HepG2 (cell line): ENCODE measurements at regions of chr16 and their contacts with region 1.

Region 1: GRCh38 chr16:5502467-5502869 is 404.9 kb upstream of the EEF2KMT start:
- DNase-seq: peak; percentile 21
- ATAC-seq: peak; percentile 80
- H3K4me3 ChIP-seq: no peak overlapping the region
- H3K27ac ChIP-seq: no peak overlapping the region
- H3K4me1 ChIP-seq: no peaks in the 10 kb centered on the region
- H3K27me3 ChIP-seq: peaks cover 0 to 5% of the 10 kb centered on the region in 2 experiments; a peak in 2 of 5 replicates
- CTCF ChIP-seq: peak; percentile 86
- EP300 ChIP-seq: no peak
- POLR2A ChIP-seq: no peak
- RAD21 ChIP-seq: peak; percentile 77

Region 2: GRCh38 chr16:5234295-5235050 is 268.0 kb before region 1 on chr16:
- CTCF ChIA-PET with region 1: no interaction called
- POLR2A ChIA-PET with region 1: no interaction called
- in situ Hi-C with region 1: no loop called
- intact Hi-C with region 1: no loop called
- DNase-seq: no peak
- ATAC-seq: no peak
- H3K4me3 ChIP-seq: no peak overlapping the region
- H3K27ac ChIP-seq: no peak overlapping the region
- H3K4me1 ChIP-seq: no peaks in the 10 kb centered on the region
- H3K27me3 ChIP-seq: peaks cover 1 to 11% of the 10 kb centered on the region in 2 experiments; a peak in 3 of 5 replicates
- CTCF ChIP-seq: 0 out of 2 replicates have a peak, but pooled peaks have one; percentile 6
- EP300 ChIP-seq: no peak
- POLR2A ChIP-seq: no peak
- RAD21 ChIP-seq: no peak

Region 3: GRCh38 chr16:5461141-5461540 is 41.3 kb before region 1 on chr16:
- CTCF ChIA-PET with region 1: no interaction called
- POLR2A ChIA-PET with region 1: no interaction called
- in situ Hi-C with region 1: no loop called
- intact Hi-C with region 1: loop called (anchors 1 kb)
- DNase-seq: no peak
- ATAC-seq: no peak
- H3K4me3 ChIP-seq: no peak overlapping the region
- H3K27ac ChIP-seq: no peak overlapping the region
- H3K4me1 ChIP-seq: no peaks in the 10 kb centered on the region
- H3K27me3 ChIP-seq: peaks cover 6 to 26% of the 10 kb centered on the region in 2 experiments; a peak in 4 of 5 replicates
- CTCF ChIP-seq: no peak
- EP300 ChIP-seq: no peak
- POLR2A ChIP-seq: no peak
- RAD21 ChIP-seq: no peak

Region 4: DNA sequence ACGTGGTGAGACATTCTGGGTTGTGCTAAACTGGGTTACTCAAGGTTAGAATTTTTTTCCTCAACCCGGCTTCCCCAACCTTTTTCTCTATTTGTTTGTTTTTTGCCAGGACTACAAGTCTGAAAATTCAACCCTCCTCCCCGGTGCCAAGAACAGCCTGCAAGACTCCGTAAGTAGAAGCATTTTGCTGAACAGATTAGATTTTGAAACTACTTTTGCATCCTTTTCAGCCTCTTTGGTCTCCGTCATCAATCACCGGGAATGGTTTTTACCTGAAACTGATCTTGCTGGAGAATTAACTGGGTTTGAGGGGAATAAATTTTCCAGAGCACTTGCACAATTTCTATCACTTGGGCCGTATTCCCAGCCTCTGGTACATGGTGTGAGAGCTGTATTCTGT is 96.3 kb after region 1 on chr16:
- CTCF ChIA-PET with region 1: no interaction called
- POLR2A ChIA-PET with region 1: no interaction called
- in situ Hi-C with region 1: loop called (anchors 5 kb)
- intact Hi-C with region 1: no loop called
- DNase-seq: no peak
- ATAC-seq: no peak
- H3K4me3 ChIP-seq: no peak overlapping the region
- H3K27ac ChIP-seq: no peak overlapping the region
- H3K4me1 ChIP-seq: no peaks in the 10 kb centered on the region
- H3K27me3 ChIP-seq: peaks cover 1 to 12% of the 10 kb centered on the region in 2 experiments; a peak in 1 of 5 replicates
- CTCF ChIP-seq: no peak
- EP300 ChIP-seq: no peak
- POLR2A ChIP-seq: no peak
- RAD21 ChIP-seq: no peak

Region 5: DNA sequence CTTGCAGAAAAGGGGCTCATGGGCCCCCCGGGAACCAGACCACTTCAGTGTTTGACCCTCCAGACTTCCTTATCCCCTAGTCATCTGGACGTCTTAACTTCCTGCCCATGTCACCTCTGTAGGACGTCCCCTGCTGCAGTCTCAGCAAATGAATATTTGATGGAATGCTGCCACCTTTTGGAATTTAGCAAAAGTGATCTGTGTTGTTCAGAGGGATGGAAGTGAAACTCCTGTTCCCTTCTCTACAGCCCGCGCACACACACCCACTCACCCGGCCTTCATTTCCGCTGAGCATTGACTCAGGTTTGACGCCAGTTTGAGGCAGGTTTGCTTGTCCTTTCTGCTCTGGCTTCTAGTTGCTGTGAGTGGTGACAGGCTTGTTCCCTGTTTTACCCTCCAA is 102.3 kb after region 1 on chr16:
- CTCF ChIA-PET with region 1: no interaction called
- POLR2A ChIA-PET with region 1: no interaction called
- in situ Hi-C with region 1: loop called (anchors 5 kb)
- intact Hi-C with region 1: loop called (anchors 1 kb)
- DNase-seq: peak; percentile 23
- ATAC-seq: peak; percentile 87
- H3K4me3 ChIP-seq: no peak overlapping the region
- H3K27ac ChIP-seq: no peak overlapping the region
- H3K4me1 ChIP-seq: no peaks in the 10 kb centered on the region
- H3K27me3 ChIP-seq: 0 out of 5 replicates have a peak, but pooled peaks cover 0 to 1% of the 10 kb centered on the region in 2 experiments
- CTCF ChIP-seq: peak; percentile 51
- EP300 ChIP-seq: no peak
- POLR2A ChIP-seq: no peak
- RAD21 ChIP-seq: no peak

Region 6: DNA sequence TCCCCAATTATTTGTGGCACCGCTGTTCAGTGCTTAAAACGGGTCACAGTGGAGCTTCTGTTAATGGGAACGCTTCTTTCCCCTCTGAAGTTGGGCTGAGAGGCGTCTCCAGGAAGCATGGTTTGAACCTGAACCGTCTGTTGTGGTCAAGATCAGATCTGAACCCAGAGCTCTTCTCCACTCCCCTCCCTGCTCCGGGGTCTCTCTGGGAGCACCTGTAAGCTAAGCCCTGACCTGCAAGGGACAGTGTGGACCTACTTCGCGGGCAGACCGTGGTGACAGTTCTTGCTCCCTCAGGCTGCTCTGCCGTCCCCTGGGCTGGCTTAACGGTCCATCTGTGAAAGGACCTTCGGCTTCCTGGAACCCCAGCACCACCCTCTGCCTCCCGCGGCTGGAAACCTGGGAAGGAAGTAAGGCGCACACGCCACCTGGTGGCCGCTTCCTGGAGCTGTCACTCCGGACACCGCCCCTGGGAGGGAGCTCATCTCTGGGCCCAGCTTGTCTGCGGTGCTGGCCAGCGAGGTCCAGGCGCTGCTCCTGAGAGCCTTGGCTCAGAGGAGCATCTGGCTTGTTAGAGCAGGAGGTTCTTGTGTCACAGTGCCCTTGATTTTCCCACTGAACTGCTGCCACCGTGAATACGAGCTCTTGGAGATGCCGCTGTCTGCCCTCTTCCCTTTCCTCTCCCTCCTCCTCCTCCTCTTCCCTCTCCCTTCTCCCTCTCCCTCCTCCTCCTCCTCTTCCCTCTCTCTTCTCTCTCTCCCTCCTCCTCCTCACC is 113.6 kb after region 1 on chr16:
- CTCF ChIA-PET with region 1: interaction called, 14 read pairs
- POLR2A ChIA-PET with region 1: no interaction called
- in situ Hi-C with region 1: no loop called
- intact Hi-C with region 1: loop called (anchors 1 kb)
- DNase-seq: peak; percentile 35
- ATAC-seq: peak; percentile 98
- H3K4me3 ChIP-seq: no peak overlapping the region; a peak in 1 of 6 replicates
- H3K27ac ChIP-seq: no peak overlapping the region
- H3K4me1 ChIP-seq: no peaks in the 10 kb centered on the region
- H3K27me3 ChIP-seq: peaks cover 1 to 9% of the 10 kb centered on the region in 2 experiments; a peak in 3 of 5 replicates
- CTCF ChIP-seq: peak; percentile 92
- EP300 ChIP-seq: no peak
- POLR2A ChIP-seq: no peak
- RAD21 ChIP-seq: peak; percentile 65

Region 7: DNA sequence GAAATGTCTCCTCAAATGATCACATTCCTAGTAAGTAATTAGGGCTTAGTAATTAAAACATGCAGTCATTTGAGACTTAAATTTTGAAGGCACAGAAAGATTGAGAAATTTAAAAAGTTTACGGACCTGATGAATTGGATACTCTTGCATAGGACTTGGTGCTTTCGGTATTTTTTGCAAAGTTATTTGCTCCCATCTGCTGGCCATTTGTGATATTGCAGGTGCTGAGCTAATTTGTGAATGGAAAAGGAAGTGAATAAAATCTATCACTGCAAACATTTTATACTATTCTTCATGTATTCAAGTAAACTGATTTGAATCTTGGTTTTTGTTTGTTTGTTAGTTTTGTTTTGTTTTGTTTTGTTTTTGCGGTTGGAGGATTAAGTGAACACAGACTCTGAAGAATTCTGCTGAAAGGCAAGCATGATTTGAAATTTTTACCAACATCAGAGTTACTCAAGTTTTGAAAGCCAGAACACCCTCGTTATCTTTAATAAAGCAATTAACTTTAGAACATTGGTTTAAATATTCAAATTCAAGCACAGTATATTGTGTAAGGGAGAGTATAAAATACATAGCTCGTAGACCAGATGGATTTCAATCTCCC is 1140.7 kb after region 1 on chr16:
- CTCF ChIA-PET with region 1: interaction called, 5 read pairs
- POLR2A ChIA-PET with region 1: no interaction called
- in situ Hi-C with region 1: loop called (anchors 25 kb)
- intact Hi-C with region 1: no loop called
- DNase-seq: peak; percentile 31
- ATAC-seq: no peak
- H3K4me3 ChIP-seq: no peak overlapping the region
- H3K27ac ChIP-seq: no peak overlapping the region
- H3K4me1 ChIP-seq: no peaks in the 10 kb centered on the region
- H3K27me3 ChIP-seq: peaks cover 3 to 16% of the 10 kb centered on the region in 2 experiments; a peak in 3 of 5 replicates
- CTCF ChIP-seq: peak; percentile 68
- EP300 ChIP-seq: no peak
- POLR2A ChIP-seq: no peak
- RAD21 ChIP-seq: peak; percentile 41; the same call in 1 of the 2 replicates